Heart right ventricle (tissue), 16 donors: ENCODE measurements at regions of chr2 and their contacts with region 1.

Region 1: GRCh38 chr2:235779444-235779896 is 285.6 kb downstream of the AGAP1 start:
- DNase-seq: peak; percentile 67 to 69
- ATAC-seq: peak; percentile 76 to 89 (median 86)
- H3K4me3 ChIP-seq: no peak overlapping the region
- H3K27ac ChIP-seq: no peak overlapping the region
- H3K4me1 ChIP-seq: no peaks in the 10 kb centered on the region
- H3K27me3 ChIP-seq: no peaks in the 10 kb centered on the region
- CTCF ChIP-seq: peak; percentile 50 to 89 (median 83)

Region 2: DNA sequence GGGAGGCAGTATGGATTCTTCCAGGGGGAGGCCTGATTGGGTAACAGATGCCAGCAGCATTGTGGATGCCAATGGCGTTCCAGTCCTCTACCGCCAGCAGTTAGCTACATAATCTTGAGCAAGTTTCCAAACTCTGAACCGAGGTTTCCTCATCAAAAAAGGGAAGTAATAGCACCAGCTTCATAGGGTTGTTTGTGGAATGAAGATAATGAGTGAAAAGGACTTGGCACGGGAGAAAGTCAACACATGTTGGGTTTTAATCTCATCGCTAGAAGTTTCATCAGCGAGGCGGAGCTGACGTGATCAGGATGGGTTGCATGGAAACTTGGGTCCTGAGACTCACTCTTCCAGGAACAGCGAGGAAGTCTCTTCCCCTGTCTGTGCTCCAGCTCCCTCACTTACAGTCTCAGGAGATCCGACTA is 561.0 kb before region 1 on chr2:
- intact Hi-C with region 1: no loop called
- DNase-seq: peak in 1 of 2 donors; percentile 12
- ATAC-seq: peak in 5 of 8 donors; percentile 29 to 89 (median 62)
- H3K4me3 ChIP-seq: no peak overlapping the region
- H3K27ac ChIP-seq: peak overlapping the region in 1 of 10 donors; percentile 45
- H3K4me1 ChIP-seq: no peaks in the 10 kb centered on the region
- H3K27me3 ChIP-seq: peaks cover 0 to 15% (median 0%) of the 10 kb centered on the region in 7 donors
- CTCF ChIP-seq: no peak

Region 3: GRCh38 chr2:235836491-235836926 is 57.0 kb after region 1 on chr2:
- intact Hi-C with region 1: no loop called
- DNase-seq: no peak
- ATAC-seq: no peak
- H3K4me3 ChIP-seq: no peak overlapping the region
- H3K27ac ChIP-seq: no peak overlapping the region
- H3K4me1 ChIP-seq: no peaks in the 10 kb centered on the region
- H3K27me3 ChIP-seq: no peaks in the 10 kb centered on the region
- CTCF ChIP-seq: no peak

Region 4: DNA sequence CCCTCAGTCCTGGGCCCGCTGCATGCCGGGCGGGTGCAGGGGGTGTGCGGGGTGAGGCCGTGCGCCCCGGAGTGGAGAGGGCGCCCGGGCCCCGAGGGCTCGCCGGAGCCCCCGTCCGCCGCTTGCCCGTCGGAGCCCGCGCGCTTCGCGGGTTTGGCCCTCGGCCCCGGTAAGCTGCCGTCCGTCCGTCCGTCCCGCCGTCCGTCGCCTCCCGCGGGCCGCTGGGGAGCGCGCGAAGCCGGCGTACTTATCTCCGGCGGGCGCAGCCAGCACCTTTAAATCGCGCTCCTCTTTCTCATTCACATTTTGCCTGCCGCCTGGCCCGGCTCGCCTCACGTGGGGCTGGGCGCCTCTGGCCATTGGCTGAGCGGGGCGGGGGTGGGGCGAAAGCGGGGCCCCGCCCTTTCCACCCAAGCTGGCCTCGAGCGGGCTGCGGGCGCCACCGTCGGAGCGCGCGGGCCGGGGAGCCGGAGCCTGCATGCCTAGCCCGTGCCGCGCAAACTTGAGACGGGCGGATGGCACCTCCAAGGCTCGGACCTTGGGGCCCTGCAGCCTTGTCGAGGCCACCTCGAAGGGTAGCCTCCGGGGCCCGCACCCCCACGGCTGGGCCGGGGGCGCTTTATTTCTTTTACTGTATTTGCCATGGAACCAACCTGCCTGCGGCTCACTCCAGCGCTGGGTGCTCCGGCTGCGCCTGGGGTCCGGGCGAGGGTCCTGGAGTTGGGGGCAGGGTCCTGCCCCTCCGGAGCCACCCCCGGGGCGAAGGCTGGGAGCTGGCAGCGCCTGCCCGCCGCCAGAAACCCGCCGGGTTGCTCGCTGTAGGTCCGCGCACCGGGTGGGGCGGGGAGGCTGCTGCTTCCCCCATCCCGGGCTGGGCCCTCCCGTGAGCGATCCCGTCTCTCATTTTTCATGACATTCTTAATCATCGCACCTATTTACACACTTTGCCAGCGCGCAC is 388.9 kb after region 1 on chr2 and contains the start of gene GBX2:
- intact Hi-C with region 1: loop called in 2 of 10 experiments (anchors 5 kb)
- DNase-seq: no peak
- ATAC-seq: peak in 7 of 8 donors; percentile 19 to 60 (median 25)
- H3K4me3 ChIP-seq: peak within 1 kb of the TSS; percentile 25 to 52 (median 40)
- H3K27ac ChIP-seq: no peak within 1 kb of the TSS
- H3K4me1 ChIP-seq: peaks cover 22 to 90% (median 67%) of the 10 kb centered on the region in 9 donors
- H3K27me3 ChIP-seq: peaks cover 77 to 100% (median 100%) of the 10 kb centered on the region in 7 donors
- CTCF ChIP-seq: no peak
- total RNA-seq, gene GBX2: 0.12 to 0.22 (median 0.15) TPM in 3 of 10 donors, not detected in the others

Region 5: GRCh38 chr2:236180831-236181453 is 401.5 kb after region 1 on chr2:
- intact Hi-C with region 1: loop called in 9 of 10 experiments (anchors 1 to 5 kb)
- DNase-seq: peak in 1 of 2 donors; percentile 54
- ATAC-seq: peak in 4 of 8 donors; percentile 32 to 50 (median 34)
- H3K4me3 ChIP-seq: no peak overlapping the region
- H3K27ac ChIP-seq: no peak overlapping the region
- H3K4me1 ChIP-seq: peaks cover 8 to 33% (median 25%) of the 10 kb centered on the region in 9 donors
- H3K27me3 ChIP-seq: peaks cover 32 to 69% (median 61%) of the 10 kb centered on the region in 7 donors
- CTCF ChIP-seq: peak; percentile 53 to 85 (median 74)

Region 6: DNA sequence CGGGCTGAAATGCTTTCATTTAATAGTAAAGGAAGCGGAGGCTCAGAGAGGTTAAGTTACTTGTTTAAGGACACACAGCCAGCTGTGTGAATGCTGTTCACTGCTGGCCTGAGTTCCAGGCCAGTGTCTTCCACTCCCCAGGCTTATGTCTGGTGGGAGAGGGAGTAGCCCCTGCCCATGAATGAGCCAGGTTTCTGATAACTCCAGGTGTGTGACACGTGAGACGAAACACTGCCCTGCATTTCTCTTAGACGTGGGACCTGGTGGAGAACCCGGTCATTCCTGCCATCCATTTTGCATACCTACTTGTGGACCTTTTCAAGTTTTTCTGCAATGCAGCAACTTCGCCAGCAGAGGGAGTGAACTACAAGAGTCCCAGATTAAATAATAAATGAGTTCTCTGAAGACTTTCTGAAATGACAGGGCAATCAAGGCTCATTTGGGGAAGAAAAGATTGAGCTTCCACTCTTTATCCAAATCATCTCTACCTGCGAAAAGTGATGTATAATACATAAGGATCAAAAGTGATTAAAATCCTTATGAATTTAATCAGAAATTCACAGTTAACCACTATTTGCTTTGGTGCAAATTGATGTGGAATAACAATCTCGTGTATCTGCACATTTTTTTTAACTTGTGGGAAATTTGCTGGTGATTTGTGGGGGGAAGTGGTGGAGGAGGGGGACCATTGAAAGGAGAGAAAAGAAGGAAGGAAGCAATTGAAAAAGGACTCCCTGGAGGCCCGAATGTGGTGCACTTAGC is 564.1 kb after region 1 on chr2:
- intact Hi-C with region 1: loop called in 1 of 10 experiments (anchors 10 kb)
- DNase-seq: peak in 1 of 2 donors; percentile 51
- ATAC-seq: peak in 1 of 8 donors; percentile 21
- H3K4me3 ChIP-seq: no peak overlapping the region
- H3K27ac ChIP-seq: peak overlapping the region in 1 of 10 donors; percentile 76
- H3K4me1 ChIP-seq: peaks cover 0 to 50% (median 10%) of the 10 kb centered on the region in 9 donors
- H3K27me3 ChIP-seq: no peaks in the 10 kb centered on the region
- CTCF ChIP-seq: peak; percentile 73 to 91 (median 83)

Region 7: DNA sequence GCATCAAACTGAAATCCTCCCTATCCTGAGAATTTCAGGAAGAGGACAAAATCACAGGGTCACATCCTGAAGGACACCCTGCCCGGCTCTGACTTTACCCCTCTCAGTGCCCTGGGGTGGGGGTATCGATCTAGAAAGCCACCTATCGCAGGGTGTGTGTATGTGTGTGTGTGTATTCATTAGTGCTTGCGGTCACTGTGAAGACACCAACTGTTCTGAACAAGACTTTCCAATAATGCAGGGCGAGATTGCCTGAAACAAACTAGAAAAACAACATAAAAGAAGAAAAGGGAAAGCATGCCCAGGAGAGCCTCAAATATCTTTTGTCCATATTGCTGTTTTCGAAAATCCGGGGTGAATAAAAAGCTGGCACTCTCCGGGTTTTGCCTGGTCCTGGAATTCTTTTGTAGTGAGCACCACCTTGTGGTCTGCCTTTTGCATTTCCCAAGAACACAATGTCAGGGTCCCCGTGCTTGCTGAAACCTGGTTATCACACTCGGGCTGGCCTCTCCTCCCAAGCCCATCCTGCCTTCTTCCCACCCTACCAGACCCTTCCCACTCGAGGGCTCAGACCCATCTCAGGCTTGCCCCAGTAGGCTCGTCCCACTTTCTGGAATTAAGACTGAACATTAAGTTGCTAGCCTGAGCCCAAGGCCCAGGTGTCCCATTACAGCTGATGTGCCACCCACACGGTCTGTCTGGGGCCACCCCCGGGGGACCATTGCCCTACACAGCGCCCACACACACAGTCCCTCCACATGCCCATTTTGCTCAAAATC is 1281.3 kb after region 1 on chr2:
- intact Hi-C with region 1: loop called in 3 of 10 experiments (anchors 10 kb)
- DNase-seq: peak in 1 of 2 donors; percentile 55
- ATAC-seq: peak; percentile 66 to 79 (median 76)
- H3K4me3 ChIP-seq: no peak overlapping the region
- H3K27ac ChIP-seq: no peak overlapping the region
- H3K4me1 ChIP-seq: peaks cover 0 to 13% (median 4%) of the 10 kb centered on the region in 9 donors
- H3K27me3 ChIP-seq: no peaks in the 10 kb centered on the region
- CTCF ChIP-seq: peak; percentile 41 to 78 (median 72)

Region 8: GRCh38 chr2:237072067-237072931 is 1292.8 kb after region 1 on chr2:
- intact Hi-C with region 1: loop called in 3 of 10 experiments (anchors 10 kb)
- DNase-seq: peak; percentile 66 to 67
- ATAC-seq: peak in 7 of 8 donors; percentile 50 to 80 (median 67)
- H3K4me3 ChIP-seq: no peak overlapping the region
- H3K27ac ChIP-seq: no peak overlapping the region
- H3K4me1 ChIP-seq: peaks cover 5 to 41% (median 31%) of the 10 kb centered on the region in 9 donors
- H3K27me3 ChIP-seq: no peaks in the 10 kb centered on the region
- CTCF ChIP-seq: peak; percentile 92 to 99 (median 98)